Activated T-helper 1 cell treated with anti-CD3 and anti-CD28 coated beads, Interleukin-12 subunit alpha, Interleukin-12 subunit beta, Interleukin-2, Interleukin-4 antibody, amounts not matched to agents 30 ng/mL and 10 ng/mL and 1 ng/mL, durations not matched to agents 14 hours and 24 hours and 36 hours (primary cell): ENCODE measurements at regions of chr5 and their contacts with region 1.

Region 1: GRCh38 chr5:58849921-58850667 is 267.2 kb downstream of the RAB3C start:
- DNase-seq: no peak
- H3K4me3 Mint-ChIP-seq: no peak overlapping the region
- H3K27ac Mint-ChIP-seq: no peak overlapping the region
- H3K4me1 Mint-ChIP-seq: no peaks in the 10 kb centered on the region
- H3K27me3 Mint-ChIP-seq: peaks cover 23% of the 10 kb centered on the region

Region 2: DNA sequence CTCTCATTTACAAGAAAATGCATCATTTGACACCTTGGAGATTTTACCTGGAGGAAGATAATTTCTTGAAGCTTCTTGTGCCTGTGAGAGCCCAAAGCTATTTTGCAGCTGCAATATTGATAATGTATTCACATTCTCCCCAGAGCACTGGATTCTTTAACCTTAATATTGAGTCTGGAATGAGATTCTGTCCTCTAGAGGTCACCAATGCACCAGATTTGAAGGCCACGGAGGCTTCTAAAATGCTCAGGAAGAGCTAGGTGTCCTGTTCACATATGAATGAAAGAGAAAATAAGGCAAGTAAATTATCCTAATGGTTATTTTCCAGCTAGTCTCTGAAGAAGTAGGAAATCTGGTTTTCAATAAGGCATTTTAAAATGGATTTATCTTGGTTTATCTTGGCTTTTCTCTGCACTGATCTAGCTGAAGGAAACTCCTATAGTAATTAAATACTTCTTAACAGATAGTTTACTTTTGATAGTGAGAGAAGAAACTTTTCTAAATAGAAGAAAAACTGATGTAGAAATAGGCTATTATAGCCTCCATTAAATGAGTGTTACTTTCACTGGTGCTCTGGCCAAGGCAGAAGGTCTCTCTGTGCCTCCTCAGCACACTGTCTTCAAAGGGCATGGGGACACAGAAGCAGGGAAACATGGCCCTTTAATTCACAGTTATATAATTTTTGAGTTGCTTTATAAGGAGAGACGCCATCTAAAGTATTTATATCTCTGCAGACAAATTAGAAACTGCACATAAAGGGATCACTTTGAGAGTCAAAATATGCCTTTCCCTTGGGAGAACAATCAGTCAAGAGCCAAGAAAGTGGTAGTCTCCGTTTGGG is 1070.5 kb before region 1 on chr5:
- intact Hi-C with region 1: loop called (anchors 2 kb)
- DNase-seq: no peak
- H3K4me3 Mint-ChIP-seq: no peak overlapping the region
- H3K27ac Mint-ChIP-seq: no peak overlapping the region
- H3K4me1 Mint-ChIP-seq: no peaks in the 10 kb centered on the region
- H3K27me3 Mint-ChIP-seq: peaks cover 1% of the 10 kb centered on the region

Region 3: GRCh38 chr5:58477760-58478376 is 372.2 kb before region 1 on chr5:
- intact Hi-C with region 1: loop called (anchors 1 kb)
- DNase-seq: no peak
- H3K4me3 Mint-ChIP-seq: no peak overlapping the region
- H3K27ac Mint-ChIP-seq: no peak overlapping the region
- H3K4me1 Mint-ChIP-seq: no peaks in the 10 kb centered on the region
- H3K27me3 Mint-ChIP-seq: no peaks in the 10 kb centered on the region

Region 4: GRCh38 chr5:58498340-58498942 is 351.7 kb before region 1 on chr5:
- intact Hi-C with region 1: loop called (anchors 2 kb)
- DNase-seq: no peak
- H3K4me3 Mint-ChIP-seq: no peak overlapping the region
- H3K27ac Mint-ChIP-seq: no peak overlapping the region
- H3K4me1 Mint-ChIP-seq: peaks cover 9% of the 10 kb centered on the region
- H3K27me3 Mint-ChIP-seq: peaks cover 17% of the 10 kb centered on the region